Activated CD8-positive, alpha-beta T cell treated with anti-CD3 and anti-CD28 coated beads for 36 hours (primary cell): ENCODE measurements at regions of chr3 and their contacts with region 1.

Region 1: DNA sequence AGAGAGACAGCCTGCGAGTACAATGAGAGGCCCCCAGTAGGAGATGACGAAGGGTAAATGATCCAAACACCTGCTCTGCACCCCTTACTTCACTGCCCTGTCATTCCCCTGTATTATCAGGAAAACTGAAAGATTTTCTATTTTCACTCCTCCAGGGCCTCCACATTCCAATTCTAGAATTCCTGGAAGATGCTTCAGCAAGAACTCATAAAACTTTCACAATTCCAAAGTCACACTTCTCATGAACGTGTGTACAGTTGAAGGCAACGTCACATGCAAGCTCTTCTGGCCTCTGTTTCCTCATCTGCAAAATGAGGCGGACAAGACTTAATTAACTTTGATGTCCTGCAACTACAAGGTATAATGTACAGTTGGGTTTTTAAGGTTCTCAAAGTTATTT is 62.8 kb upstream of the SPATA12 start:
- DNase-seq: no peak
- ATAC-seq: no peak
- H3K4me3 Mint-ChIP-seq: no peak overlapping the region
- H3K27ac Mint-ChIP-seq: no peak overlapping the region
- H3K4me1 Mint-ChIP-seq: no peaks in the 10 kb centered on the region
- H3K27me3 Mint-ChIP-seq: no peaks in the 10 kb centered on the region
- CTCF ChIP-seq: no peak

Region 2: GRCh38 chr3:57007513-57008460 is 10.1 kb after region 1 on chr3:
- CTCF ChIA-PET with region 1: interaction called, 36 read pairs
- POLR2A ChIA-PET with region 1: no interaction called
- intact Hi-C with region 1: no loop called
- DNase-seq: peak; percentile 45
- ATAC-seq: peak; percentile 88
- H3K4me3 Mint-ChIP-seq: no peak overlapping the region
- H3K27ac Mint-ChIP-seq: peak overlapping the region; percentile 50
- H3K4me1 Mint-ChIP-seq: peaks cover 8% of the 10 kb centered on the region
- H3K27me3 Mint-ChIP-seq: peaks cover 2% of the 10 kb centered on the region
- CTCF ChIP-seq: no peak